ENCODE measurements at regions of chr7 and their contacts with region 1.

Region 1: GRCh38 chr7:102175423-102176170 is 111.1 kb upstream of the SH2B2 start:
- DNase-seq: no peak
- ATAC-seq: no peak
- H3K4me3 ChIP-seq: no peak overlapping the region
- H3K27ac ChIP-seq: no peak overlapping the region
- H3K4me1 ChIP-seq: no peaks in the 10 kb centered on the region
- H3K27me3 ChIP-seq: no peaks in the 10 kb centered on the region
- CTCF ChIP-seq: no peak

Region 2: GRCh38 chr7:102079140-102080018 is 96.2 kb before region 1 on chr7:
- CTCF ChIA-PET with region 1: interaction called, 11 read pairs
- POLR2A ChIA-PET with region 1: no interaction called
- in situ Hi-C with region 1: no loop called
- intact Hi-C with region 1: no loop called
- DNase-seq: no peak
- ATAC-seq: no peak; the same call in 1 of the 2 replicates
- H3K4me3 ChIP-seq: no peak overlapping the region
- H3K27ac ChIP-seq: no peak overlapping the region
- H3K4me1 ChIP-seq: no peaks in the 10 kb centered on the region
- H3K27me3 ChIP-seq: no peaks in the 10 kb centered on the region
- CTCF ChIP-seq: no peak

Region 3: DNA sequence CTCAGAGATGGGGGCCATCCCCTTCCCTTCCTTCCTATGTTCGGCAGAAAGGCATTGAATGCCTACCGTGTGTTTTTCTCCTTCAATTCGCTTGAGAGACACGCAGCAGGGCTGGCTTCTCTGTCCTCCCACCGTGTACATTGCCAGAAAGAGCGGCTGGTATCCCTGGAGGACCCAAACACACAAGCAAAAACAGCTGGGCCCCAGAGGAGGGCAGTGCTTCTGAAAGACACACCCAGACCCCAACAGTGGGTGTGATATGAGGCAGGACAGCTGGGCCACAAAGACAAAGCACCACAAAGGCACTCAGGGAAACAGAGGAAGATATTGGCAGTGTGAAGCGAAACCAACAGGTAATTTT is 22.0 kb before region 1 on chr7:
- CTCF ChIA-PET with region 1: no interaction called
- POLR2A ChIA-PET with region 1: no interaction called
- in situ Hi-C with region 1: no loop called
- intact Hi-C with region 1: no loop called
- DNase-seq: no peak
- ATAC-seq: no peak
- H3K4me3 ChIP-seq: no peak overlapping the region
- H3K27ac ChIP-seq: no peak overlapping the region
- H3K4me1 ChIP-seq: no peaks in the 10 kb centered on the region
- H3K27me3 ChIP-seq: no peaks in the 10 kb centered on the region
- CTCF ChIP-seq: no peak

Measured in Panc1 (cell line).